Breast epithelium (tissue), 4 donors: ENCODE measurements at regions of chr11 and their contacts with region 1.

Region 1: DNA sequence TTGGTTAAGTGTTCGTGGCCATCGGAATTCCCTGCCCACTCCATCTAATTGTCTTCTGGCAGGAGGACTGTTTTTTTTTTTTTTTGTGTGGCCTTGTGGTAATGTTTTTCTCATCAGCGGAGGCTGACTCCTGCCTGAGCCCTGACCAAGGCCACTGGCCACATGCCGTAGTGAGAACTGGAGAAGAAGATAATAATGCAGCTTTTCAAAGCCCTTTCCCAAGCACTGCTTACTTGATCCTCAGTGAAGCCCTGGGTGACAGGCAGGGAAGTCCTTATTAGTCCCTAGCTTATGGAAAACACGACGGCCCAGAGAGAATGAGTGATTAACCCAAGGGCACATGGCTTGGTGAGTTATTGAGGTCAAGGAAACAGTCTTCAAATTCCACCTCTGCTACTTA is 71.2 kb downstream of the ADM start:
- DNase-seq: no peak
- H3K4me3 ChIP-seq: no peak overlapping the region
- H3K27ac ChIP-seq: peak overlapping the region in 1 of 2 donors; percentile 66
- H3K4me1 ChIP-seq: peaks cover 0 to 6% of the 10 kb centered on the region in 2 donors
- H3K27me3 ChIP-seq: no peaks in the 10 kb centered on the region
- CTCF ChIP-seq: no peak
- POLR2A ChIP-seq: no peak

Region 2: DNA sequence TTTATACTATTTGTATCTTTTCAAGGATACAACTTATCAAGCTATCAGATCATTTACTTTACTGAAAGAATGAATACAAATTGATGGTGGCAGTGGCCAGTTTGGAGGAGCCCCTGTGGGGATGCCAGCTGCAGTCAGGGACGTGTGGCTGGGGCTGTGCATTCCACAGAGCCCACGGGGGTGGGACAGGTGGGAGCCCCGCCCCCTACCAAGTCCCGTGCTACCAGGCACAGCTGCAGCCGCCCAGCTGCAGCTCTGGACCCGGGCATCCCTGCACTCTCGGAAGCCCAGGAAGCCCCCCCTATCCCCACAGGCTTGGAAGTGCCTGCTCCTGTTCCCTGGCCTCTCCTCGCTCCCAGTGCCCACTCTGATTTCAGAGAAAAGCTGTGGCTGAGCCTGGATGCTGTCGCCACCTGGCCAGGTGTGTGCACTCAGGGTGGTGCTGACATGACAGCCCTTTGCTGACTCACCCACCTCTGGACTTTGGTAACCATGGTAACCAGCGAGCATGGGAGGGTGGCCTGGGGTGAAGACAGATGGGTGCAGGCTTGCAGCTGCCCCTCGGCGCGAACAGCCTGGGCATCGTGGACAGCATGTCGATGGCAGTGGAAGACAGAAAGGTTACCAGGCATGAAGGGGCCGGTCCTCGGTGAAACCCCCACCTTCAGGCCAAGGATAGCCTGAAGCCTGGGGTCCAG is 220.1 kb before region 1 on chr11:
- intact Hi-C with region 1: no loop called
- DNase-seq: no peak
- H3K4me3 ChIP-seq: no peak overlapping the region
- H3K27ac ChIP-seq: no peak overlapping the region
- H3K4me1 ChIP-seq: no peaks in the 10 kb centered on the region
- H3K27me3 ChIP-seq: no peaks in the 10 kb centered on the region
- CTCF ChIP-seq: no peak
- POLR2A ChIP-seq: no peak

Region 3: DNA sequence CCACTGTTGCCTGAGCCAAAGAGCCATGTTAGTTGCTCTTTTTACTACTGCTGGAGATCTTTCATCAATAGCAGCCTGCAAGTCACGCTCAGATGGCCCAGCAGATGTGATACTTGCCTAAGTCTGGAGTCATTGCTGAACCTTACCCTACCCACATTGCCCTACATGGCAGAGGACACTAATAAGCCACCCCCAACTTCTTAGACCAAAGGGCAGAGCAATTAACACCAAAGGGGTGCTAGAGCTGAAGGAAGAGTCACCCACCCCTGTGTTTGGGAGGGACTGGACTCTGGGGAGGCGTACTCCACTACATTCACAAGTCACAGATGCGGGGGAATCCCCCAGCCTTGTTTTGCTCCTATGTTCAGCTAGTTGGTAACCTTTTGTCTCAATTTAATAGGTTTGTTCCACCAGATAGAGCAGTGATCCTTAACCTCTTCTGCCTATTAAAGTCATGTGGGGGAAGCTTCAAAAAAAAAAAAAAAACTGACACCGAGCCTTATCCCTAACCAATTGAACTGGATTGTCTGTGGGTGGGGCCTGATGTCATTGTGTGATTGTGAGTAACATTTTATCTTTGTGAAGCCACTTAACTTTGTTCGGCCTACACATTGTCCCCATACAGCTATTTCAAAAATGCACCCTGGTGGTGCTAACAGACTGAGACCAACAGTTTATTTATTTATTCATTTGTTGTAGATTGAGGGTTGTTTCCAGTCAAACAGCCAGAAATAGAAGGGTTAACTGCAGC is 58.1 kb before region 1 on chr11:
- intact Hi-C with region 1: loop called (anchors 2 kb)
- DNase-seq: no peak
- H3K4me3 ChIP-seq: no peak overlapping the region
- H3K27ac ChIP-seq: peak overlapping the region; percentile 9 to 62
- H3K4me1 ChIP-seq: no peaks in the 10 kb centered on the region
- H3K27me3 ChIP-seq: no peaks in the 10 kb centered on the region
- CTCF ChIP-seq: no peak
- POLR2A ChIP-seq: no peak